ENCODE measurements at regions of chr2 and their contacts with region 1.

Region 1: GRCh38 chr2:20411361-20411894 is 35.4 kb upstream of the RHOB start:
- H3K4me3 ChIP-seq: no peak overlapping the region
- H3K27ac ChIP-seq: no peak overlapping the region
- H3K4me1 ChIP-seq: no peaks in the 10 kb centered on the region
- CTCF ChIP-seq: peak; percentile 45; the same call in 1 of the 2 replicates

Region 2: DNA sequence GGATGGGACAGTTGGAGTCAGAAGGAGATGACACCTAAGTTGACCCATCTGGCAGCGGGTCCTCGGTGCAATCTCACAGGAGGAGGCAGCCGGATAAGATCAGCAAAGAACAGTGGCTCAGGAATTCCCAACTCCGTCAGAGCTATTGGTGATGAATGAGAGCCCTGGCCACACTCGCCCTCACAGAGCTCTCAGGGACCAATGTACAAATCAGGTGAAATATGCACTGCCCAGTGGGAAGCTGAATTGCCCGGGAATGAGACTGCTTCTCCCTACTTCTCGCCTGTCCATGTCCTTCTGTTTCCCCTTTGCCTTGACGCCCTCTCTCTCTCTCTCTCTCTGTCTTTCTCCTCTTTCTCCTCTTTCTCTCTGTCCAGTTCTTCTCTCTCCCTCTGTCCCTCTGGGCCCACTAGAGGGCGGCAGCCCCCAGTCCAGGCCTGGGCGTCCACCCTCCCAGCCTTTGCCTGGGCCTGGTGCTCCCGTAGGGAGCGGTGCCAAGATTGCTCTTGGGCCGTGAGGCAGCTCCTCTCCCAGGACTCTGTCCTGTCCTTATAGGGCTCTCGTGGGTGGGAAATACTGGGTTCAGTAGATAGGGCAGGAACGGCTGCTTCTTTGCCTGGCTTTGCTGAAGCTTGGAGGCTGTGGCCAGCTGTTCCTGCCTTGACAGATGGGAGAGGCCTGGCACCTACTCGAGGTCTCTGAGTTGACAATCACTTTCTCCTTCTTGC is 32.5 kb before region 1 on chr2:
- CTCF ChIA-PET with region 1: interaction called, 45 read pairs
- POLR2A ChIA-PET with region 1: no interaction called
- H3K4me3 ChIP-seq: no peak overlapping the region
- H3K27ac ChIP-seq: no peak overlapping the region
- H3K4me1 ChIP-seq: peaks cover 10% of the 10 kb centered on the region
- CTCF ChIP-seq: peak; percentile 92

Region 3: DNA sequence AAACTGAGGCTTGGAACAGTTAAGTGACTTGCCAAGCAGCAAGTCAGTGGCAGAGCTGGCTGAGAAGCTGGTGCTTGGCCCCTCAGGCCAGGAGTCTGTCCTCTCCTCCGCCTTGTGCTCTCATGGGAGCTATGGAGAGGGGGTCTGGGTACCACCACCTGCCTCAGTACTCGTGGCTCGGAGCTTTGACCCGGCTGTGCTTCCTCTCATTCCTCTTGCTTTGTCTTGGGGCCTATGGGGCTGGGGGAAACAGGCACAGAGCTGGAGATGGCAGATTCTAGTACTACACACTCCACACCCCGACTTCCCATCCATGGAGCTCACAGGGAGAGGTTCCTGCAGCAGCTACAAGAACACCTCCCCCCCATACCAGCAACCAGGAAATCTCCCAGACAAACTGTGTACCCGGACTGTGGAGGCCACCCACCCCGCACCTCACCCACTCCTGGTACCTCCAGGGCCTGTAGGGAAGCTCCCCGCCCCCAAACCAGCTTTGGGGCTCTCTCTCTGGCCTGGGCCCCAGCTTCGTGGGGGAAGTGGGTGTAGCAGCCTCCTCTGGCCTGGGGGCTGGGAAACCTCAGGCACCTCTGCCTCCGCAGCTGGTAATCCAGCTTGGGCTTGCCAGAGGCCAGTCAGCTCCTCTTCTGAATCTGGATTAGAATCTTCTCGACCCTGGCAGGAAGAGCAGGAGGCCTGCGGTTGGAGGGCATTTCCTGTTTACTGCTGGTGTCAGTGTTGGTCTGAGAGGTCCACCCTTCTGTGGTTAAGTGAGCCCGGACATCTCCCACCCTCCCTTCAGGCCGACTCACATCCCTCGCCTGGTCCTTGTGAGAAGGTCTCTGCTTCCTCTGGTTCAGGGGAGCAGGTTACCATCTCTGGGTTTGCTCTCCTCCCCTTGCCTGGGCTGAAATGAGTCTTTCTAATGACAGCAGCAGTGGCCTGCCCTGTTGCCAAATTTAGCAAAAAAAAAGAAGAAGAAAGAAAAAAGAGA is 13.2 kb after region 1 on chr2:
- CTCF ChIA-PET with region 1: interaction called, 20 read pairs
- POLR2A ChIA-PET with region 1: no interaction called
- H3K4me3 ChIP-seq: no peak overlapping the region
- H3K27ac ChIP-seq: no peak overlapping the region
- H3K4me1 ChIP-seq: no peaks in the 10 kb centered on the region
- CTCF ChIP-seq: no peak

Region 4: GRCh38 chr2:20496081-20496876 is 84.9 kb after region 1 on chr2:
- CTCF ChIA-PET with region 1: no interaction called
- POLR2A ChIA-PET with region 1: no interaction called
- H3K4me3 ChIP-seq: no peak overlapping the region
- H3K27ac ChIP-seq: no peak overlapping the region
- H3K4me1 ChIP-seq: no peaks in the 10 kb centered on the region
- CTCF ChIP-seq: no peak

Region 5: GRCh38 chr2:20635675-20636584 is 224.5 kb after region 1 on chr2:
- CTCF ChIA-PET with region 1: interaction called, 48 read pairs
- POLR2A ChIA-PET with region 1: no interaction called
- H3K4me3 ChIP-seq: no peak overlapping the region
- H3K27ac ChIP-seq: no peak overlapping the region
- H3K4me1 ChIP-seq: 0 out of 2 replicates have a peak, but pooled peaks cover 5% of the 10 kb centered on the region
- CTCF ChIP-seq: peak; percentile 89

Region 6: DNA sequence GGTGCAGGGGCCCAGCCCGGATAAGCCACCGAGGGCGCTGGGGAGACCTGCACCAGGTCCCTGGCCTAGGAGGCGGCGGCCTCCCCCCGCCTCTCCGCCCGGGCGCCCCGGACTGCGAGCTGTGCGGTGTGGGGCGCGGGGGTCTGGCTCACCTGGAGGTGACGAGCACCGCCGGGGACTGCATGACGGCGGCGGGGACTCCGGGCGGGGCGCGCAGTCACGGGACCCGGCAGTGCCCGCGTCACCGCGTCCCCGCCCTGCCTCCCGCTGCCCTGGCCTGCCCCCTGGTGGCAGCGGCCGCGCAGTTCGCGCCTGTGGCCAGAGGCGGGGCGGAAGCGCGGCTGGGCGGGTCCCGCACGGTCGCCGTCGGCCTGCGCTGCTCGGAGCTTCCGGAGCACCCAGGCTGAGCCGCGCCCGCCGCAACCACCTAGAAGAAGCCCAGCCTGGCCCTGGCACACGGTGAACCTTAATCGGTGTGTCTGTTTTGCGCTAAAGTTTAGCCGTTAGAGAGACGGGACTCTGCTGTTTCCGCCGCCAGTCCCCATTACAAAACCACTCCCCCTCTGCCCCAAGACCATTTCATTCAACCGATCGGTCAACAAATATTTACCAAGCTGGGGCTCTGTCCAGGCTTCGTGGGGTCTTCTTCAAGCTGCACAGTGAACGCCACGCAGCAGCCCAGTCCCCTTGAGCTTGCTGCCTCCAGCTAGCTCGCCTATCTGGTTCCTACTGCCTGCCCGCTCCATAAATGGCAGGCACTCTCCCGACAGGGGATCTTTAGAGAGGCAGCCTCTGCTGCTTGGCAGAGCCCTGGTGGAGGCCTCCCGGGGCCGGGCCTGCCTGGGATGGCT is 239.7 kb after region 1 on chr2 and contains the start of gene HS1BP3:
- CTCF ChIA-PET with region 1: interaction called, 16 read pairs
- POLR2A ChIA-PET with region 1: no interaction called
- H3K4me3 ChIP-seq: peak within 1 kb of the TSS; percentile 66
- H3K27ac ChIP-seq: peak within 1 kb of the TSS; percentile 43; the same call in 1 of the 2 replicates
- H3K4me1 ChIP-seq: no peaks in the 10 kb centered on the region
- CTCF ChIP-seq: no peak; the same call in 1 of the 2 replicates